ENCODE measurements at regions of chr20 and their contacts with region 1.

Region 1: DNA sequence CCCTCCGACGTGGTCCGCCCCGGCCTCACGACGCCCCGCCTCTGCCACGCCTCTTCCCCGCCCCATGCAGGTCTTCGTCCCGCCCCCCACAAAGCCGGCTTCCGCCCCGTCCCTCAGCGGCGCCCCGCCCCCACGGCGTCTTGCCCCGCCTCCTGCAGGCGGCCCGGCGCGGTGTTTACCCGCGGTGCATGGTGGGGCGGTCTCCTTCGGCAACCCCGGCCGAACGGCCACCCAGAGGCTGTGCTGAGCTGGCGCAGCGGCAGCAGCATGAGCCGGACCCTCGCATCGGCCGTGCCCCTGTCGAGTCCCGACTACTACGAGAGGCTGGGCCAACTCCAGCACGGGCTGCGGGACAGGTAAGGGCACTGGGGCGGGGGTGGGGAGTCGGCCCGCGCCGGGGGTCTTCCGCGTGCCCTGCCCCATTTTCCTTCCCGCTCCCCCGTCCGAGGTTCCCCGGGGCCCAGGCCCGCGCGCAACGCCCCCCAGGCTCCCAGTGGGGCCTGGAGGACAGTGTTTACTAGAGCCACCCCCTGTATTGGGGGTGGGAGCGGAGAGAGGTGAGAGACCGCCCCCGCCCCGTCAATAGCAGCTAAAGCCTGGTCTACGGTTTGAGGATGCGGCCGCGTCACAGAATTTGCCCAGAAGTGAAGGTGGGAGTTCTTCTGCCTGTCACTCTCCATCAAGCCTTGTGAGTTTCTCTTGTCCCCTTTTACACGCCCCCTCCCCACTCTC is at the start of gene KIZ:
- DNase-seq: peak; percentile 100
- ATAC-seq: peak; percentile 96
- H3K4me3 Mint-ChIP-seq: peak within 1 kb of the TSS; percentile 87
- H3K27ac Mint-ChIP-seq: peak within 1 kb of the TSS; percentile 44
- H3K4me1 Mint-ChIP-seq: peaks cover 10% of the 10 kb centered on the region
- H3K27me3 Mint-ChIP-seq: peaks cover 6% of the 10 kb centered on the region
- CTCF ChIP-seq: no peak
- total RNA-seq, gene KIZ: 15.8 and 18.0 TPM in 2 replicates

Region 2: DNA sequence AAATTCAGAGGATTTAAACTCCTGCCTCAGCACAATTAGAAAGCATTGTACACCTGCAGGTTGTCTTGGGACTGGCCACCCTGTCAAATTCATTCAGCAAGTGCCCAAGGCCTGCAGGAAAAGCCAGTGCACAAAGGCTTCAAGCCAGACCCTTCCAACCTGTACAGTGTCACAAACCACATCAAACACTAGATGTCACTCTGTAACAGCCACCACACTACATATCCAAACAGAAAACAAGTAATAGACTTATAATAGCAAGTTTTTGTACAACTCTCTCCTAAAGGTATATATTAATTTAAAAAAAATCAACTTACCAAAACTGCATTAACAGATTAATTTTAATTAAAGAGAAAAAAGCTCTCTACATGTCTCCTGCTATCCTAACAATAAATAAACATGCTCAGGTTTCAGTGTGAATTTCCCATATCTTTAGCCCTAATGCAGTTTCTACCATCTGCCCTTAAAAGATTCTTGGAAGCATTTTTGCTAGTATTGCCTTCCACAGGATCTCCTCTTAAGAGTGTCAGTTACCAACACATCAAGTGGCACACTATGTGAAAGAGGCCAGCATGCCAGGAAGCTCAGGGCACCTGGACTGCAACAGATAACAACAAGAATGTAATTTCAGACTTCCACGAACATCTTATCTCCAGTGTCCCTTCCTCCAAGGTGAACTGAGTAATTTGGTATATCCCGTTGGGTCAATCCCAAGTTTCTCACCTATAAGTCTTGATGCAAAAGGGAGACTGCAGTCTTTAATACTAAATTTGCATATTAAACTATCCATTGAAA is 461.0 kb before region 1 on chr20:
- CTCF ChIA-PET with region 1: no interaction called
- POLR2A ChIA-PET with region 1: no interaction called
- intact Hi-C with region 1: loop called (anchors 10 kb)
- DNase-seq: no peak
- ATAC-seq: no peak
- H3K4me3 Mint-ChIP-seq: no peak overlapping the region
- H3K27ac Mint-ChIP-seq: no peak overlapping the region
- H3K4me1 Mint-ChIP-seq: peaks cover 36% of the 10 kb centered on the region
- H3K27me3 Mint-ChIP-seq: no peaks in the 10 kb centered on the region
- CTCF ChIP-seq: no peak

Region 3: GRCh38 chr20:20712474-20713243 is 413.4 kb before region 1 on chr20 and contains the start of gene RALGAPA2:
- CTCF ChIA-PET with region 1: no interaction called
- POLR2A ChIA-PET with region 1: no interaction called
- intact Hi-C with region 1: loop called (anchors 2 kb)
- DNase-seq: peak; percentile 97
- ATAC-seq: peak; percentile 96
- H3K4me3 Mint-ChIP-seq: peak within 1 kb of the TSS; percentile 90
- H3K27ac Mint-ChIP-seq: peak within 1 kb of the TSS; percentile 92
- H3K4me1 Mint-ChIP-seq: peaks cover 26% of the 10 kb centered on the region
- H3K27me3 Mint-ChIP-seq: no peaks in the 10 kb centered on the region
- CTCF ChIP-seq: no peak
- total RNA-seq, gene RALGAPA2: 16.5 and 19.2 TPM in 2 replicates

Region 4: DNA sequence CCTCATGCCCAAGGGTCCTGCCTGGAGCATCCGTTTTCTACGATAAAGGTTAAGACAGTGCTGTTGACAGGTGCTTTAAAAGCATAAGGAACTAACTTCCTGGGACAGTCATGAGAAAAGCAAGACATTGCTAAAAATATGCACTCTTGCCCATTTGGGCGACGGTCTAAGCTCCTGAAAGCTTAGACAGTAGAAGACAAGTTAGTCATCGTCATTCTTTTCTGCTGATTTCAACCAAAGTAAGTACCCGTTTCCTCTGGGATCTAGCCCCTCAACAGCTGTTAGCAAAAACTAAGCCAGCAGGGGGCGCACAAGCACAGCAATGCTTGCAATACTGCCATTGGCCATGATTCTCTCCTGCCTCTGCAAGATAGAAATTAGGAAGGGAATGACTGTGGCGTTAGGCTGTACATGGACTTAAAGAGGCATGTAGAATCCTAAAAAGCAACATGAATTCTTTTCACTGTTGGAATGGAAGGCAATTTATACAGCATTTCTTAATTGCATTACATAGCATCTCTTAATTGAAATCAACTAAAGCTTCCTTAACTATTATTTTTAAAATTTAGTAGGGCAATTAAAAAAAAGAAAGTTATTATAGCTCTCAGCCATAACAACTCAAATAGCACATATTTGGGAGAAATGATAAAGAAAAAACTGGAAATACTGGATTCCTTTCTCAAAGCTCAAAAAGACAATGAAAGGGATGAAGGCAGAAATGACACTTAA is 265.8 kb before region 1 on chr20:
- CTCF ChIA-PET with region 1: no interaction called
- POLR2A ChIA-PET with region 1: no interaction called
- intact Hi-C with region 1: loop called (anchors 1 kb)
- DNase-seq: peak; percentile 60
- ATAC-seq: peak; percentile 21
- H3K4me3 Mint-ChIP-seq: no peak overlapping the region
- H3K27ac Mint-ChIP-seq: no peak overlapping the region
- H3K4me1 Mint-ChIP-seq: no peaks in the 10 kb centered on the region
- H3K27me3 Mint-ChIP-seq: peaks cover 25% of the 10 kb centered on the region
- CTCF ChIP-seq: no peak

Region 5: GRCh38 chr20:21048841-21049273 is 77.2 kb before region 1 on chr20:
- CTCF ChIA-PET with region 1: no interaction called
- POLR2A ChIA-PET with region 1: no interaction called
- intact Hi-C with region 1: loop called (anchors 1 kb)
- DNase-seq: peak; percentile 21
- ATAC-seq: peak; percentile 25
- H3K4me3 Mint-ChIP-seq: no peak overlapping the region
- H3K27ac Mint-ChIP-seq: no peak overlapping the region
- H3K4me1 Mint-ChIP-seq: no peaks in the 10 kb centered on the region
- H3K27me3 Mint-ChIP-seq: peaks cover 23% of the 10 kb centered on the region
- CTCF ChIP-seq: peak; percentile 25

Region 6: GRCh38 chr20:21099751-21100577 is 26.1 kb before region 1 on chr20:
- CTCF ChIA-PET with region 1: no interaction called
- POLR2A ChIA-PET with region 1: interaction called, 5 read pairs
- intact Hi-C with region 1: loop called (anchors 1 kb)
- DNase-seq: peak; percentile 42
- ATAC-seq: peak; percentile 57
- H3K4me3 Mint-ChIP-seq: peak overlapping the region; percentile 88
- H3K27ac Mint-ChIP-seq: peak overlapping the region; percentile 83
- H3K4me1 Mint-ChIP-seq: peaks cover 36% of the 10 kb centered on the region
- H3K27me3 Mint-ChIP-seq: peaks cover 72% of the 10 kb centered on the region
- CTCF ChIP-seq: no peak

Region 7: GRCh38 chr20:21114584-21114983 is 11.4 kb before region 1 on chr20:
- CTCF ChIA-PET with region 1: no interaction called
- POLR2A ChIA-PET with region 1: no interaction called
- intact Hi-C with region 1: no loop called
- DNase-seq: no peak
- ATAC-seq: no peak
- H3K4me3 Mint-ChIP-seq: no peak overlapping the region
- H3K27ac Mint-ChIP-seq: no peak overlapping the region
- H3K4me1 Mint-ChIP-seq: no peaks in the 10 kb centered on the region
- H3K27me3 Mint-ChIP-seq: peaks cover 36% of the 10 kb centered on the region
- CTCF ChIP-seq: no peak

Region 8: DNA sequence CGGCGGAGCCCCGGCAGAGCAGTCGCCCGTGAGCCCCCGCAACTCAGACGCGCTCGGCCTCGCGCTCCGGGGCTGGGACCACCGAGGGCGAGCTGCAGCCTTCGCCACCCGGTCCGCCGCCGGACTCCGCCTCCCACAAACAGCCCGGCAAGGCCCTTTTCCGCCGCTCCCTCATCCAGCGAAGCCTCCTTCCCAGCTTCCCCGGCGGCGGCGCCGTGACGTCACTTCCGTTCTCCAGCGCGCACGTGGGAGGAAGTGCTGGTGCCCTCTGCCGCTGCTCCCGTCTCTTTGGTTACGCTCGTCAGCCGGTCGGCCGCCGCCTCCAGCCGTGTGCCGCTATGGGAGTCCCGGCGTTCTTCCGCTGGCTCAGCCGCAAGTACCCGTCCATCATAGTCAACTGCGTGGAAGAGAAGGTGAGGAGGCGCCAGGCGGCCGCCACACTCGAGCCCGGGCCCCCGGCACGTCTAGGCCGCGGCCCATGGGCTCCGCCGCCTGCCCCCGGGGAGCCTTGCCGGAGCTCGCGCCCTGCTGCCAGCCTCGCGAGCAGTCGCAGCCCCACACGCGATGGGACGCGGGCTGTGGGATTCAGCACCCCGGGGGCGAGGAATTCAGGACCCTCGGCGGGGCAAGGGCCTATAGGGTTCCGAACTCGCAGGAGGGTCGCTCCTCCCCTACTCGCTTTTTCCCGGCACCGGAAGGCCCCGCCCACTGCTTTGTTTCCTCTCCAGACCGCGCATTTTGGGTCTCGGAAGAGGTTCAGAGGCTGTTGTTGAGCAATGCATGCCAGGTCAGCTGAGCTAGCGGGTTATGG is 177.3 kb after region 1 on chr20 and contains the start of gene XRN2:
- CTCF ChIA-PET with region 1: no interaction called
- POLR2A ChIA-PET with region 1: no interaction called
- intact Hi-C with region 1: loop called (anchors 5 kb)
- DNase-seq: peak; percentile 93
- ATAC-seq: peak; percentile 85
- H3K4me3 Mint-ChIP-seq: peak within 1 kb of the TSS; percentile 98
- H3K27ac Mint-ChIP-seq: peak within 1 kb of the TSS; percentile 98
- H3K4me1 Mint-ChIP-seq: peaks cover 30% of the 10 kb centered on the region
- H3K27me3 Mint-ChIP-seq: no peaks in the 10 kb centered on the region
- CTCF ChIP-seq: no peak
- total RNA-seq, gene XRN2: 60.7 and 61.0 TPM in 2 replicates